A673 (cell line): ENCODE measurements at regions of chr1 and their contacts with region 1.

Region 1: GRCh38 chr1:98053471-98054366 is 132.9 kb upstream of the DPYD start:
- DNase-seq: peak; percentile 88
- H3K4me3 ChIP-seq: peak overlapping the region; percentile 65
- H3K27ac ChIP-seq: peak overlapping the region; percentile 59
- H3K4me1 ChIP-seq: peaks cover 40% of the 10 kb centered on the region
- H3K27me3 ChIP-seq: peaks cover 8% of the 10 kb centered on the region
- CTCF ChIP-seq: peak; percentile 76

Region 2: GRCh38 chr1:96236156-96236739 is 1817.5 kb before region 1 on chr1:
- CTCF ChIA-PET with region 1: no interaction called
- POLR2A ChIA-PET with region 1: no interaction called
- intact Hi-C with region 1: loop called (anchors 5 kb)
- DNase-seq: peak; percentile 69
- H3K4me3 ChIP-seq: no peak overlapping the region
- H3K27ac ChIP-seq: no peak overlapping the region
- H3K4me1 ChIP-seq: peaks cover 8% of the 10 kb centered on the region
- H3K27me3 ChIP-seq: no peaks in the 10 kb centered on the region
- CTCF ChIP-seq: peak; percentile 72

Region 3: DNA sequence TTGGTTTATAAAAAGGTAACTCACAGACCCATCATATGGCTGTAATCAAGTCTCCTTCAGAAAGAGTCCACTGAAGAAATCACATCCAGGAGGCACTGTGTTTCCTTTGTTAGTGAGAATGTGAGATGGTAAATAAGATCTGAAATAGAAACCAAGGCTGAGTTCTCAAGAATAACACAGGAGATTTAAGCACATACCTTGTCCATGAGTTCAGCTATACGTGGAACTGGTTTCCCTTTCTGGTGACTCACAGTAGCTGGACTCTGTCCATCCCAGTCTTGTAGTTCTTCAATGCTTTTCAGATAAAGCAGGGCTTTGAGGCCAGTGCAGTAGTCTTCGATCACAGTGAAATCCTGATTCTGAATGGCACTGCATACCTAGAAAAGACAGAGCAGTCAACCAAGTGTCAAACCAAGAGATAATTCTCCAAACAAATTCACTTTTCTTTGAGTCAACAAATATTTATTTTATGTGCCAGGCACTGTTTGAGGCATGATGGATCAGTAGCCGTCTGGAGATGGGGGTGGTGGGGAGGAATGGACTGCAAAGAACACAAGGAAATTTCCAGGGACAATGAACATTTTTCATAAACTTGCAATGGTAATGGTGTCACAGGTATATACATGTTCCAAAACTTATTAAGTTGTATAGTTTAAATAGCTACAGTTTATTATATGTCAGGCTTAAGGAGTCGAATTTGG is 860.7 kb before region 1 on chr1:
- CTCF ChIA-PET with region 1: no interaction called
- POLR2A ChIA-PET with region 1: no interaction called
- intact Hi-C with region 1: loop called (anchors 5 kb)
- DNase-seq: no peak
- H3K4me3 ChIP-seq: no peak overlapping the region
- H3K27ac ChIP-seq: no peak overlapping the region
- H3K4me1 ChIP-seq: peaks cover 36% of the 10 kb centered on the region
- H3K27me3 ChIP-seq: no peaks in the 10 kb centered on the region
- CTCF ChIP-seq: no peak

Region 4: DNA sequence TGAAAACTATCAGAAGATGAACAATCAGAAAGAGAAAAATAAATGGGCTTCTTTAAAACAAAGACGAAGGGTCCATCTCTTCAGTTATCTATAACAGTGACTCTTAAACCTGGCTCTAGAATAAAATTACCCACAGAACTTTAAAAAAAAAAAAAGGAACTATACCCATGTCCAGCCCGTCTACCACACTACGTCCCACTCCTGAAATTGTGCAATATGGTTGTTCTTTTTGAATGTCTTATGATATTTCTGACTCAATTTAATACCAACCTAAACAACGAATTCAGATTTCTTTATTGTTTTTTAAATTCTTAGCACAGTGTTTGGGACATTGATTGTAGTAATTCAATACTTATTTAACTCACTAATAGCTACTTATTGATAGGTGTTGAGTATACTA is 379.2 kb before region 1 on chr1:
- CTCF ChIA-PET with region 1: no interaction called
- POLR2A ChIA-PET with region 1: no interaction called
- intact Hi-C with region 1: loop called (anchors 10 kb)
- DNase-seq: no peak
- H3K4me3 ChIP-seq: no peak overlapping the region
- H3K27ac ChIP-seq: no peak overlapping the region
- H3K4me1 ChIP-seq: no peaks in the 10 kb centered on the region
- H3K27me3 ChIP-seq: no peaks in the 10 kb centered on the region
- CTCF ChIP-seq: no peak

Region 5: GRCh38 chr1:98468111-98468717 is 414.5 kb after region 1 on chr1:
- CTCF ChIA-PET with region 1: interaction called, 3 read pairs
- POLR2A ChIA-PET with region 1: no interaction called
- intact Hi-C with region 1: loop called (anchors 5 kb)
- DNase-seq: peak; percentile 80
- H3K4me3 ChIP-seq: no peak overlapping the region
- H3K27ac ChIP-seq: no peak overlapping the region
- H3K4me1 ChIP-seq: peaks cover 15% of the 10 kb centered on the region
- H3K27me3 ChIP-seq: no peaks in the 10 kb centered on the region
- CTCF ChIP-seq: peak; percentile 86

Region 6: GRCh38 chr1:99007366-99007765 is 953.6 kb after region 1 on chr1:
- CTCF ChIA-PET with region 1: no interaction called
- POLR2A ChIA-PET with region 1: no interaction called
- intact Hi-C with region 1: no loop called
- DNase-seq: no peak
- H3K4me3 ChIP-seq: no peak overlapping the region
- H3K27ac ChIP-seq: no peak overlapping the region
- H3K4me1 ChIP-seq: no peaks in the 10 kb centered on the region
- H3K27me3 ChIP-seq: peaks cover 77% of the 10 kb centered on the region
- CTCF ChIP-seq: no peak